Aorta (tissue), 5 donors: ENCODE measurements at regions of chr10 and their contacts with region 1.

Region 1: GRCh38 chr10:102713814-102714620 is at the start of gene ARL3:
- DNase-seq: peak; percentile 99
- ATAC-seq: peak; percentile 99
- H3K4me3 ChIP-seq: peak within 1 kb of the TSS; percentile 48 to 69
- H3K27ac ChIP-seq: peak within 1 kb of the TSS in 1 of 2 donors; percentile 11
- H3K4me1 ChIP-seq: no peaks in the 10 kb centered on the region
- H3K27me3 ChIP-seq: no peaks in the 10 kb centered on the region
- total RNA-seq, gene ARL3: 8.2 to 8.6 TPM

Region 2: DNA sequence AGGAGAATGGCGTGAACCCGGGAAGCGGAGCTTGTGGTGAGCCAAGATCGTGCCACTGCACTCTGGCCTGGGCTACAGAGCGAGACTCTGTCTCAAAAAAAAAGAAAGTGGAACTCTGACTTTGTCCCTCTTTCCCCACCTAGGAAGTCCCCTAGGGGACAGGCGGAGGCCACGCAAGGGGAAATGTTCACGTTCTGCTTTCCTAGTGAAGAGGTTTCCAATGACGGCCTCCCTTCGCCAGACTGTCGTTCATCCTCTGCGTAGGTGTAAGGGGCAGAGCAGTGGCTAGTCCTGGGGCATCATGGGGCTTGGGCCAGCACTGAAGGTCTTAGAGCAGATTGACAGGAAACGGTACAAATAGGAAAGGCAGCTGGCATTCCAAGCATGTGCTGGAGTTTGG is 179.7 kb before region 1 on chr10:
- intact Hi-C with region 1: no loop called
- DNase-seq: peak in 1 of 2 donors; percentile 47
- ATAC-seq: no peak
- H3K4me3 ChIP-seq: no peak overlapping the region
- H3K27ac ChIP-seq: no peak overlapping the region
- H3K4me1 ChIP-seq: no peaks in the 10 kb centered on the region
- H3K27me3 ChIP-seq: no peaks in the 10 kb centered on the region

Region 3: GRCh38 chr10:102668326-102669107 is 45.5 kb before region 1 on chr10:
- intact Hi-C with region 1: no loop called
- DNase-seq: peak in 1 of 2 donors; percentile 56
- ATAC-seq: no peak
- H3K4me3 ChIP-seq: no peak overlapping the region
- H3K27ac ChIP-seq: peak overlapping the region in 1 of 2 donors; percentile 18
- H3K4me1 ChIP-seq: no peaks in the 10 kb centered on the region
- H3K27me3 ChIP-seq: no peaks in the 10 kb centered on the region

Region 4: GRCh38 chr10:102678842-102679289 is 35.2 kb before region 1 on chr10:
- intact Hi-C with region 1: loop called in 1 of 2 experiments (anchors 5 kb)
- DNase-seq: peak; percentile 82 to 86
- ATAC-seq: peak; percentile 49
- H3K4me3 ChIP-seq: no peak overlapping the region
- H3K27ac ChIP-seq: no peak overlapping the region
- H3K4me1 ChIP-seq: peaks cover 0 to 3% of the 10 kb centered on the region in 2 donors
- H3K27me3 ChIP-seq: no peaks in the 10 kb centered on the region